Cardiac septum (tissue), 1 donor: ENCODE measurements at regions of chr1 and their contacts with region 1.

Region 1: DNA sequence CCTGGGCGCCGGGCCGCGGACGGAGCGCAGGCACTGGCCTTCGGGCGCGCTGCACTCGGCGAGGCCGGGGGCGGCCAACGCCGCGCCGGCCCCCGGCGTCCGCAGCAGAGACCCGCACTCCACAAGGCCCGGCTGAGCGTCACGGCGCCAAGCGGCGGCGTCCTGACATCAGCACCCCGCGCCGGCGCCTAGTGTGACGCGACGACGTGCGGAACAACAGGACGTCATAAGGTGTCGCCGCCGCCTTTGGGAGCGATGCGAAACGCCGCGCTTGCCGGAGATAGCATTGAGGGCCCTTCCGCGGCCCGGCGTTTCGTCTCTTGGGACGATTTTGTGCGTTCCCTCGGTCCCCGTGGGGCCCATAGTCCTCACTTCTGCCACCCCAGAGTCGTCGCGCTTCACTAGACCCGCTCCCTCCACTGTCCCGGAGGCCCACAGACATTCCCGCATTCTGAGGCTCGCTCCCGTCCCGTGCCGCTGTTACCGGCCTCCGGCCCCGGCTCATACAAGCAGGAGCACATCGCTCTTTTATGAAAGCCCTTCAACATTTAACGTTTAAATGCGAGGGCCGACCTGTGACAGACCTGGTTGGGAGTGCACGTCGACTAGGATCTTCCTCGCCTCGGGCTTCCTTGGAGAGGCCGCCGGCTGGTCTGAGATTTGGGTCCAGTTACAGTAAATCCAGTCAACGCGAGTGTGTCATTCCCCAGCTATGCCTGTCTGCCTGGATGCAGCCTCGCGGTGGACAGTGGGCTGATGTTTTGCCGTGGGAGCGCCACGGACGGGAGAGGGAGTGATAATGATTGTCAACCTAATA is at the start of gene SSU72:
- DNase-seq: peak; percentile 95
- total RNA-seq, gene SSU72: 90.7 TPM

Region 2: DNA sequence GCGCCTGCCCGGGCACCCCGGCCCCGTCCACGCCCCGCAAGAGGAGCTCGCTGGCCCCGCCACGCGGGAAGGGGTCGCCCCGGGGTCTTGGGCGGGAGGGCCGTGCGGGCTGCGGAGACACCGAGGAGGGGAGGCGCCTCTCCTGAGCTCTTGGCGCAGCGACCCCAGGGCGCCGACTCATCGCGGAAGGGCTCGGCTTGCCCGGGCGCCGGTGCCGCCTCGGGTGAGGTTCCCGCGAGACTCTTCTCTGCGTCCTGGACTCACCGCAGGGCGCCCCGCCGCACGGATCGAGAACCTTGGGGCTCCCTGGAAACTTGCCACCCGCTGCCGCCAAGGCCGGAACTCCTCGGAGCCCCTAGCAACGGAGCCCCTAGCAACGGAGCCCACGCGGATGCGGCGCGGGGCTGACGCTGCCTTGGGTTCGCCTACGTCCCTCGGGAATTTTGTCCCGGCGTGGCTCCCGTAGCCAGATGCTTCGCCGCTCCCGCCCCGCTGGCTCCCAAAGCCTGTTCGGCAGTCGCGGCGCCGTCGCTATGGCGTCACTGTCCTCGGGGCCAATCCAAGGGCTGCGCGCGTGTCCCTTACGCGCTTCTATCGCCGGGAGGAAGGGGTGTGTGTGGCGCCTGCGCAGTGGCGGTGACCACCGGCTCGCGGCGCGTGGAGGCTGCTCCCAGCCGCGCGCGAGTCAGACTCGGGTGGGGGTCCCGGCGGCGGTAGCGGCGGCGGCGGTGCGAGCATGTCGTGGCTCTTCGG is 63.2 kb before region 1 on chr1 and contains the start of gene ATAD3A:
- intact Hi-C with region 1: loop called (anchors 2 kb)
- DNase-seq: peak; percentile 99
- total RNA-seq, gene ATAD3A: 13.7 TPM

Region 3: DNA sequence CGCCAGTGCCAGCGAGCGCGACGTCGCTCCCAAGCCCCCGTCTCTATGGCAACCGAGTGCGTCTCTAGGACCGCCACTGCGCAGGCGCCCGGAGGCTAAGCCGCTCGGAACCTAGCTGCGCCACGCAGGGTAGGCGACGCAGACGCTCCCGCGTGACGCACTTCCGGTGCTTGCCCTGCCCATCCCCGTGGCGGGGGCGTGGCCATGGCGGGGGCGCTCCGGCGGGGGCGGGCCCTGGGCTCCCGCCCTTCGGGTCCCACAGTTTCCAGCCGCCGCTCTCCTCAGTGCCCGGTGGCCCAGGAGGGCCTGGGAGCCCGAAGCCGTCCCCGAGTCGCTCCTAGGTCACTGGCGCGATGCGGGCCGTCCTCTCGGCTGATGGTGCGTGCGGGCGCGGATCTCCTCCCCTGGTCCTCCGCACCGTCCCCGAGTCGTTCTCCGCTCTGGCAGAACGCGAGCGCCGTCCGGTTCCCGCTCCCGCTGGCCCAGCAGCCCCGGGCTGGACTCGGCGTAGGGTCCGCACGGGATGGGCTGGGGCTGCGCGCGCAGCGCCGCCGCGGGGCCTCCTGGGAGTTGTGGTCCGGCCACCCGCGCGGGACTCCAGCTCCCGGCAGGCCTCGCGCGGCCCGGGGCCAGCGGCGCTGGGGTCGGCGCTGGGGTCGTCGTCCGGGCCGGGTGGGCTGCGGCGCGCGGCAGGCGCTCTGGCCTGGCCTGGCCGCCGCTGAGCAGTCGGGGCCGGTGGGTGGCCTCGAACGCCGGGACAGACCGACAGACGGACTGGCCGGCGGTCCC is 40.5 kb after region 1 on chr1 and contains the start of gene MIB2:
- intact Hi-C with region 1: loop called (anchors 2 kb)
- DNase-seq: peak; percentile 98
- total RNA-seq, gene MIB2: 82.4 TPM